ENCODE measurements at regions of chr5 and their contacts with region 1.

Region 1: GRCh38 chr5:126656396-126657007 is 55.8 kb downstream of the PHAX start:
- DNase-seq: no peak

Region 2: GRCh38 chr5:126776497-126777256 is 120.2 kb after region 1 on chr5 and contains the start of gene LMNB1:
- intact Hi-C with region 1: loop called (anchors 5 kb)
- DNase-seq: peak; percentile 98
- total RNA-seq, gene LMNB1: 3.0 TPM

Region 3: DNA sequence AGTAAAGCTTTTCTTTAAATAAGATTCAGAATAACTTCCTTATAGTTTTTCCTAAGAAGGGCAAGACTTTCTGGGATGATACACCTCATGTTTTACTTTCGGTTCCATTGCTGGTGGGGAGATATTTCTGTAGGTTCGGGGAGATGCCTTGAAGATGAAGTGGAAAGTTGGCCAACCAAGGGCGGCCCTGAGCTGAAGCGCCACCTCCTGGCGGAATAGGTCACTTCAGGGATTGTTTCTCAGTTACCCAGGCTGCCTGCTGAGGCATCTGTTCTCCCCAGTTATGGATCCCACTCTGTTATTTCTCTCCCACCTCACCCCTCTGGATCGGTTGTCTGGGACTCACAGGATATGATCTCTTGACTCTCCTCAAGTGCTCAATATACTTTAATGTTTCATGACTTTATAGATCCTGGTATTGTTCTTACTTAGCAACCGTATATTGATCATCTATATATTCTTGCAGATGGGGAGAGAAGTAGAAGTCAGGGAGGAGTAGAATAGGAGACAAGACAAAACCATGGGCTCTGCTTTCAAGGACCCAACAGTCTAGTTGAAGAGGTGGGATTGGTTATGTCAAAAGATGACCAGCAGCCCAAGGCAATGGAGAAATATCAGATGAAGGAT is 657.5 kb after region 1 on chr5:
- intact Hi-C with region 1: loop called (anchors 10 kb)
- DNase-seq: no peak